Common myeloid progenitor, CD34-positive (primary cell): ENCODE measurements at regions of chr16 and their contacts with region 1.

Region 1: GRCh38 chr16:50747207-50747956 is 5.5 kb downstream of the CYLD start:
- DNase-seq: peak; percentile 68 to 81 (median 79)
- H3K4me3 ChIP-seq: peak overlapping the region in 5 of 7 experiments; percentile 5 to 61 (median 37)
- H3K27ac ChIP-seq: peak overlapping the region in 1 of 2 experiments; percentile 68
- H3K4me1 ChIP-seq: peaks cover 41 to 66% (median 48%) of the 10 kb centered on the region in 4 experiments
- H3K27me3 ChIP-seq: no peaks in the 10 kb centered on the region

Region 2: GRCh38 chr16:50696575-50697420 is 50.6 kb before region 1 on chr16:
- CTCF ChIA-PET with region 1: interaction called, 17 read pairs
- POLR2A ChIA-PET with region 1: no interaction called
- DNase-seq: peak in 2 of 3 donors; percentile 64 to 70
- H3K4me3 ChIP-seq: no peak overlapping the region
- H3K27ac ChIP-seq: peak overlapping the region in 1 of 2 experiments; percentile 39
- H3K4me1 ChIP-seq: peaks cover 2 to 54% (median 43%) of the 10 kb centered on the region in 4 experiments
- H3K27me3 ChIP-seq: no peaks in the 10 kb centered on the region

Region 3: GRCh38 chr16:50735629-50736122 is 11.7 kb before region 1 on chr16:
- CTCF ChIA-PET with region 1: interaction called, 10 read pairs
- POLR2A ChIA-PET with region 1: no interaction called
- DNase-seq: peak in 1 of 3 donors; percentile 37
- H3K4me3 ChIP-seq: no peak overlapping the region
- H3K27ac ChIP-seq: no peak overlapping the region
- H3K4me1 ChIP-seq: peaks cover 0 to 13% (median 9%) of the 10 kb centered on the region in 4 experiments
- H3K27me3 ChIP-seq: no peaks in the 10 kb centered on the region